Heart right ventricle (tissue), 16 donors: ENCODE measurements at regions of chr19 and their contacts with region 1.

Region 1: DNA sequence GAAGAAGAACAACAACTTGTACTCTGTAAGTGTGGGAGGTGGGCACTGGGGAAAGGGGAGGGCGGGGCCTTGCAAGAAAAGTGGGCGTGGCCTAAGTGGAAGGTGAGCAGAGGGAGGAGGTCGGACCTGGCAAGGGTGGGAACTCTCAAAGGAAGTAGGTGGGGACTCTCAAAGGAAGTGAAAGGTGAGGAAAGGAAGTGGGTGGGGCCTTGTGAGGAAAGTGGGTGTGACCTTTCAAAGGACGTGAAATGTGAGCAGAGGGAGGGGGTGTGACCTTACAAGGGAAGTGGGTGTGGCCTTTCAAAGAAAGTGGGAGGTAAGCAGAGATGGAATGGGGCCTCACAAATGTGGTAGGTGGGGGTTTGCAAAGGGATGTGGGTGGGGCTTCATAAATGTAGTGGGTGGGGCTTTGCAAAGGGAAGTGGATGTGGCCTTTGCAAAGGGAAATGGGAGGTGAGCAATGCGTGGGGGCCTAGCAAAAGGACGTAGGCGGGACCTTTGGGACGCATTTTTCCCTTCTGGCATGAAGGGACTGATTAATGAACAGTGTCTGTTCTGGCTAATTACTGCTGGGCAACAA is 25.9 kb downstream of the ACSBG2 start:
- DNase-seq: peak; percentile 18 to 63
- ATAC-seq: peak; percentile 79 to 96 (median 89)
- H3K4me3 ChIP-seq: no peak overlapping the region
- H3K27ac ChIP-seq: peak overlapping the region in 6 of 10 donors; percentile 21 to 63 (median 32)
- H3K4me1 ChIP-seq: peaks cover 0 to 8% (median 0%) of the 10 kb centered on the region in 9 donors
- H3K27me3 ChIP-seq: no peaks in the 10 kb centered on the region
- CTCF ChIP-seq: no peak

Region 2: GRCh38 chr19:6201996-6202395 is 40.6 kb after region 1 on chr19:
- intact Hi-C with region 1: loop called in 1 of 10 experiments (anchors 1 kb)
- DNase-seq: no peak
- ATAC-seq: no peak
- H3K4me3 ChIP-seq: no peak overlapping the region
- H3K27ac ChIP-seq: no peak overlapping the region
- H3K4me1 ChIP-seq: peaks cover 4 to 20% (median 11%) of the 10 kb centered on the region in 9 donors
- H3K27me3 ChIP-seq: no peaks in the 10 kb centered on the region
- CTCF ChIP-seq: no peak